A673 (cell line): ENCODE measurements at regions of chr12 and their contacts with region 1.

Region 1: DNA sequence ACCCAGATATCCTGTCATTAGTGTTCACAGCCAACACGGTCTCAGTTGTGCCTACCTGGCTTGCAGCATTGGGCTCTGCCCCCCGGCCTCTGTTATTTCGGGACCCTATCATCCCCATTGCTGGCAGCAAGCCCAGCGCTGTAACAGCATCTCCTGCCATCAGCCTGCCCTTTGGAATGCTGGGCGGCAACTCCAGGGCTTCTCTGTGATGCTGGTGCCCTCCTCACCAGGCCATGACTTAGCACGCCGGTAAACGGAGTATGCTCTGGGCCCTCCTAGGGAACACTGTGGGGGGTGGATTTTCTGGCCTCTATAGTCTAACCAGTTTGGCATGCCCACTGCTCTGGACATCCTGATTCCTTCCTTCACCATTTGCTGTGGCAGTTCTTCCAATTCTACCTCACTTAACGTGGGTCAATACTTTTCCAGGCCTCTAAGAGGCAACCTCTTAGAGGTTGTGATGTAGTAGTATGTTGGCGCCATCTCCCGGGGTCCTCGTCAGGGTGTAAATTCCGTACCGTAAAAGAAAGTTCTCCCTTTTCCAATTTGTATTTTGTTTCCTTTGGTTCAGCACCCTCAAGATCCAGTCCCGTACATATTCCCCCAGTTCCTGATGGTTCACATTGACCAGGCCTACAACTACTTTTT is 80.0 kb downstream of the SINHCAF start:
- DNase-seq: no peak
- H3K4me3 ChIP-seq: no peak overlapping the region
- H3K27ac ChIP-seq: no peak overlapping the region
- H3K4me1 ChIP-seq: no peaks in the 10 kb centered on the region
- H3K27me3 ChIP-seq: no peaks in the 10 kb centered on the region
- CTCF ChIP-seq: 0 out of 2 replicates have a peak, but pooled peaks have one; percentile 17

Region 2: DNA sequence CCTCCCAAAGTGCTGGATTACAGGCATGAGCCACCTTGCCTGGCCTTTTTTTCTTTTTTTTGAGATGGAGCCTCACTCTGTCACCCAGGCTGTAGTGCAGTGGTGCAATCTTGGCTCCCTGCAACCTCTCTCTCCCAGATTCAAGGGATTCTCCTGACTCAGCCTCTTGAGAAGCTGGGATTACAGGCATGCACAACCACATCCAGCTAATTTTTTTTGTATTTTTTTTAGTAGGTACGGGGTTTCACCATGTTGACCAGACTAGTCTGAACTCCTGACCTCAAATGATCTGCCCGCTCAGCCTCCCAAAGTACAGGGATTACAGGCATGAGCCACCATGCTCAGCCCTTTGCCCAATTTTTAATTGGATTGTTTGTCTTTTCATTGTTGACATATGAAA is 22.0 kb after region 1 on chr12:
- CTCF ChIA-PET with region 1: interaction called, 12 read pairs
- POLR2A ChIA-PET with region 1: no interaction called
- intact Hi-C with region 1: no loop called
- DNase-seq: no peak
- H3K4me3 ChIP-seq: no peak overlapping the region
- H3K27ac ChIP-seq: no peak overlapping the region
- H3K4me1 ChIP-seq: no peaks in the 10 kb centered on the region
- H3K27me3 ChIP-seq: no peaks in the 10 kb centered on the region
- CTCF ChIP-seq: no peak

Region 3: DNA sequence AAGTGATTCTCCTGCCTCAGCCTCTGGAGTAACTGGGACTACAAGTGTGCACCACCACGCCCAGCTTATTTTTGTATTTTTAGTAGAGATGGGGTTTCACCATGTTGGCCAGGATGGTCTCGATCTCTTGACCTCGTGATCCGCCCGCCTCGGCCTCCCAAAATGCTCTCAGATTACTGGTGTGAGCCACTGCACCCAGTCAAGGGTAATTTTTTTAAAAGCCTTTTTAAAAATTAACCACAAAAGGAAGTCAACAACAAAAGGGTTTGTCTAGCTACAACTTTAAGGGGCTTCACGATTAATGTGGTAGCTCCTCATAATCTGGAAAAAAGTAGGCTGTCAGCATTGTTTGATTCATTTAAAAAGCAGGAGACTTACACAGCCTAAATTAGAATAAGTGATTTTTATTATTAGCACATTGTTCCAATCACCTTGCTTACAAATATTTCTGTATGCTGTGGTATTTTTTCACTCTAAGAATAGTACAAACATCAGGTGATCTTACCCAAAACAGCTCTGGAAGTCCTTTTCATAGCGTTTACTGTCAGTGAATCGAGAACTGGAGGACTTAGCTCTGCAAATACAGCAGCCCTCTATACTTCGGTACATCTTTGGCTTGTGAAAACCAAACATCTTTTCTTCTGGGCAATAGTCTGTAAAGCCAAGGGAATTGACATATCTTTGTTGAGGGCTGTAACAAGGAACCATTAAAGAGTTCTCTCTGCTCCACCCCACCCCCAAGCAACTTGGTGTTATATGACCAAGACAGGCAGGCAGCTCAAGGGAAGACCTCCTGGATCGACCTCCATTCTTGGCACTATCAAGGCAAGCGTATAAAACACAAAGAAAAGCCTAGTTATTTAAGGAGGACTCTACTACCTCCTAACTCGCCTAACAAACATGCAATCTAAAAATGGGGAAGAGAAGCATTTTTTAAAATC is 51.9 kb after region 1 on chr12:
- CTCF ChIA-PET with region 1: no interaction called
- POLR2A ChIA-PET with region 1: no interaction called
- intact Hi-C with region 1: no loop called
- DNase-seq: no peak
- H3K4me3 ChIP-seq: no peak overlapping the region
- H3K27ac ChIP-seq: no peak overlapping the region
- H3K4me1 ChIP-seq: no peaks in the 10 kb centered on the region
- H3K27me3 ChIP-seq: no peaks in the 10 kb centered on the region
- CTCF ChIP-seq: no peak

Region 4: DNA sequence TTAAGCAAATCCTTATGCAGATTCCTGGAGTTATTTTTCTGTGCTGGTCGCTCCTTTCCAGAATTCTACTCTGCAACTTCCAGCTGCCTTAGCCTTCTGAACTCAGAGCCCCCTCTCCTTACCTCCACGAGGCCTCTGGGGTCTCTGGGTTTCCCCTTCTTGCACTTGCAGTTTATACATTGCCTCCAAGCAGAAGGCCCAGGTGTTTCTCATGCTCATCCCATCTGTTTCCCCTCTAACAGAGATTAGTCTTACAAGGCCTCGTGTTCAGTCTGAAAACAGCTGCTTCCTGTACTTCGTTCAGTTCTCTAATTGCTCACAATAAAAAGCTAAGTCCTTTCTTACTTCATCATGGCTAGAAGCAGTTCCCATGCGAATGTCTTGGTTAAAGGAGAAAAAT is 1019.0 kb after region 1 on chr12:
- CTCF ChIA-PET with region 1: no interaction called
- POLR2A ChIA-PET with region 1: no interaction called
- intact Hi-C with region 1: no loop called
- DNase-seq: peak; percentile 77
- H3K4me3 ChIP-seq: no peak overlapping the region
- H3K27ac ChIP-seq: peak overlapping the region; percentile 88
- H3K4me1 ChIP-seq: peaks cover 28% of the 10 kb centered on the region
- H3K27me3 ChIP-seq: no peaks in the 10 kb centered on the region
- CTCF ChIP-seq: no peak